ENCODE measurements at regions of chr10 and their contacts with region 1.

Region 1: GRCh38 chr10:59906417-59907202 is at the start of gene CCDC6:
- DNase-seq: peak; percentile 93
- H3K4me3 Mint-ChIP-seq: peak within 1 kb of the TSS; percentile 95
- H3K27ac Mint-ChIP-seq: peak within 1 kb of the TSS; percentile 98
- H3K4me1 Mint-ChIP-seq: peaks cover 53% of the 10 kb centered on the region
- H3K27me3 Mint-ChIP-seq: no peaks in the 10 kb centered on the region
- total RNA-seq, gene CCDC6: 43.1 to 44.9 TPM

Region 2: DNA sequence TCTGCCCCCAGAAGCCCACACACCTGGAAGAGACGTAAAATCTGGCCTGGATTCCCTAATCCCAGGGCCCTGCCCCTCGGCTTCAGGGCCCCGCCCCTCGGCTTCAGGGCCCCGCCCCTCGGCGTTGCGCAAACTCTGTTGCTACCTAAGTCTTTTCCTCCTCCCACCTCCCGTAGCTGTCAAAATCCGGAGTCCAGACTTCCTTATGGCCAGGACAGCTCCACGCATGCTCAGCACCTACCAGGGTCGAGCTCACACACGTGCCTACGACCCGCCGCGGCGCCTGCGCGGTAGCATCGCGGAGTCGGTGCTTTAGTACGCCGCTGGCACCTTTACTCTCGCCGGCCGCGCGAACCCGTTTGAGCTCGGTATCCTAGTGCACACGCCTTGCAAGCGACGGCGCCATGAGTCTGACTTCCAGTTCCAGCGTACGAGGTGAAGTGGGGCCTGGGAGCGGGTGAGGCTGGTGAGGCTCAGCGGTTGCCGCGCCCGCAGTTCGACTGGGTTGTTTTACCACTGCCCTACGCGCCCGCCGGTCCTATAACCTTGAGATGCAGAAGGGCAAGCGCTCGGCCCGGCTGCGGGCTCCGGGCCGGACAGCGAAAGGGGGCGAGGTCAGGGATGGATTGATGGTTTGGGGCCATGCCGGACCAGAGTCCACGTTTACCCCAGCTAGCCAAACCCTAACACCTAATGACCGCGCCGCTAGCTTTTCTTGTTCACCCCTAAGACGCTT is 1637.6 kb before region 1 on chr10 and contains the start of gene CISD1:
- CTCF ChIA-PET with region 1: no interaction called
- intact Hi-C with region 1: loop called (anchors 2 kb)
- DNase-seq: peak; percentile 95
- H3K4me3 Mint-ChIP-seq: peak within 1 kb of the TSS; percentile 96
- H3K27ac Mint-ChIP-seq: peak within 1 kb of the TSS; percentile 93
- H3K4me1 Mint-ChIP-seq: peaks cover 27% of the 10 kb centered on the region
- H3K27me3 Mint-ChIP-seq: no peaks in the 10 kb centered on the region
- total RNA-seq, gene CISD1: 52.7 to 55.0 TPM

Region 3: GRCh38 chr10:59709395-59710125 is 197.1 kb before region 1 on chr10 and contains the start of gene SLC16A9:
- CTCF ChIA-PET with region 1: interaction called, 8 read pairs
- intact Hi-C with region 1: loop called (anchors 1 kb)
- DNase-seq: peak; percentile 89
- H3K4me3 Mint-ChIP-seq: peak within 1 kb of the TSS; percentile 72
- H3K27ac Mint-ChIP-seq: no peak within 1 kb of the TSS
- H3K4me1 Mint-ChIP-seq: peaks cover 8% of the 10 kb centered on the region
- H3K27me3 Mint-ChIP-seq: peaks cover 62% of the 10 kb centered on the region
- total RNA-seq, gene SLC16A9: 0.84 to 0.86 TPM

Region 4: DNA sequence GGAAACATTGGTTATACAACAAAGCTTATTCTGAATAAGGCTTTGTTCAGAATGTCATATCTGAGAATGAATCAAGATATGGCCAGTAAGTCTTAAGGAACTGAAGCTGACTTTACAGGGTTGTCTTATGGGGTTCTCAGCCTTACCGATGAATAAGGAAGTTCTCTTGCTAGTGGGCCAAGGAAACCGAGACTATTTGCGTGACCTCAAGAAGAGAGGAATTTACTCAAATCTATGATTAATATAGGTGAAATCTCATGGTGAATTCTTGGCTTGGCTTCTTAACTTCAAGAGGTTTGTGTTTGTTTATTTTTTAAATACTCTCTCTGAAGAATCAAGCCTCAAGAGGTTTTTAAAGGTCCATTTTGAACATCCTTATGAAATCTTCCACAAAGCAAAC is 148.6 kb before region 1 on chr10:
- CTCF ChIA-PET with region 1: no interaction called
- intact Hi-C with region 1: no loop called
- DNase-seq: no peak
- H3K4me3 Mint-ChIP-seq: no peak overlapping the region
- H3K27ac Mint-ChIP-seq: no peak overlapping the region
- H3K4me1 Mint-ChIP-seq: no peaks in the 10 kb centered on the region
- H3K27me3 Mint-ChIP-seq: peaks cover 3% of the 10 kb centered on the region

Region 5: GRCh38 chr10:59865101-59865500 is 41.5 kb before region 1 on chr10:
- CTCF ChIA-PET with region 1: interaction called, 36 read pairs
- intact Hi-C with region 1: loop called (anchors 1 kb)
- DNase-seq: peak; percentile 33
- H3K4me3 Mint-ChIP-seq: no peak overlapping the region
- H3K27ac Mint-ChIP-seq: peak overlapping the region; percentile 14
- H3K4me1 Mint-ChIP-seq: peaks cover 70% of the 10 kb centered on the region
- H3K27me3 Mint-ChIP-seq: no peaks in the 10 kb centered on the region

Region 6: DNA sequence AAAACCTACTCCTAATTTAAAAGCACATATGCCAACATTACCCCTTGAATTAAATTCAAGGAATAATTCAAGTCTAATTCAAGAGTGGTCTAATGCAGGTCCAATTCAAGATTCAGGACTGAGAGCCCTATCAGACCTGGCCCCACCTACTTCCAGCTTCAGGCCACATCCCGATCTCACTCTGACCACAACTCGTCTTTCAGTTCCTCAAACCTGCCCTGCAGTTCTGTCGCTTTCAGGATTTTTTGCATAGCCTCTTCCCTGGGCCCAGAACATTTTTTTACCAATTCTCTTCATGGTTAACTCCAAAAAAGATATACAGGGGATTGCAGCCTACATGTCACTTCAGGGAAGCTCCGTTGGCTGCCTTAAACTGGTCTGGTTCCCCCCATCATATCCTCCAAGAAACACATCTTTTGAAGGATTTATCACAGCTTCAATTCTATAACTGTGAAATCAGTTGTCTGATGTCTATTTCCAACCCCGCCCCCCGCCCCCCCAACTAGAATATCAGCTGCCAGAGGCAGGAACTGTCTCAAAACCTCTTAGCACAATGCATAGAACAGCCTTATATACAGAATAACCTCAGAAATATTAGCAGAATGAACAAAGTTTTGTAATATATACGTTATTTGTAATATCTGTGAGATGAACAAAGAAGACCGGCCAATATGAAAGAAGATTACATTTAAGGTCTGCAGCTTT is 21.0 kb before region 1 on chr10:
- CTCF ChIA-PET with region 1: interaction called, 6 read pairs
- intact Hi-C with region 1: loop called (anchors 1 kb)
- DNase-seq: peak; percentile 28
- H3K4me3 Mint-ChIP-seq: no peak overlapping the region
- H3K27ac Mint-ChIP-seq: peak overlapping the region; percentile 65
- H3K4me1 Mint-ChIP-seq: peaks cover 85% of the 10 kb centered on the region
- H3K27me3 Mint-ChIP-seq: no peaks in the 10 kb centered on the region

Region 7: GRCh38 chr10:60208676-60209269 is 302.2 kb after region 1 on chr10:
- CTCF ChIA-PET with region 1: no interaction called
- intact Hi-C with region 1: loop called (anchors 1 kb)
- DNase-seq: no peak
- H3K4me3 Mint-ChIP-seq: no peak overlapping the region
- H3K27ac Mint-ChIP-seq: no peak overlapping the region
- H3K4me1 Mint-ChIP-seq: peaks cover 17% of the 10 kb centered on the region
- H3K27me3 Mint-ChIP-seq: no peaks in the 10 kb centered on the region

Region 8: GRCh38 chr10:60728056-60728455 is 821.4 kb after region 1 on chr10:
- CTCF ChIA-PET with region 1: no interaction called
- intact Hi-C with region 1: loop called (anchors 2 kb)
- DNase-seq: no peak
- H3K4me3 Mint-ChIP-seq: peak overlapping the region; percentile 71
- H3K27ac Mint-ChIP-seq: peak overlapping the region; percentile 91
- H3K4me1 Mint-ChIP-seq: peaks cover 60% of the 10 kb centered on the region
- H3K27me3 Mint-ChIP-seq: peaks cover 2% of the 10 kb centered on the region

Measured in activated naive CD4-positive, alpha-beta T cell treated with anti-CD3 and anti-CD28 coated beads for 36 hours (primary cell).